ENCODE measurements at regions of chr17 and their contacts with region 1.

Region 1: DNA sequence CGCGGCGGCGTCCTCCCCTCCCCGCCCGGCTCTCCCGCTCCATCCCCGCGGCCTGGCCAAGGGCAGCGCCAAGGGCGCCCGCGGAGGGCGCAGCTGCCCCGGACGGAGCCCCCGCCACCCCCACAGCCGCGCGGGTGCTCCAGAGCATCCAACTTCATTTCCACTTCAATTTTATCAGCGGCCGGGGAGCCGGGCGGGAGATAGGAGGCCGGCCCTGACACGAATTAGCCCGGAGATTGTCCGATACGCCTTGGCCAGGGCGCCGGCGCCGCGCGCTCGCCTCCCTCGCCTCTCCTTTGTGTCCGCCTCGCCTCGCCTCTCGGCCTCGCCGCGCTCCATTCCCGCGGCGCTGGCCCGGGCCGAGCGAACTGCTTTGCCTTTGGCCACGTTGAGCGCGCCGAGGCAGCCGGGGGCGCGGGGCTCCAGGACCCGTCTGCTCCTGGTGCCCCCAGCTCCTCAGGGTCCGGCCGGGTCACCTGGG is 129.1 kb upstream of the LHX1 start:
- DNase-seq: no peak
- ATAC-seq: no peak
- H3K4me3 ChIP-seq: no peak overlapping the region
- H3K27ac ChIP-seq: no peak overlapping the region
- H3K4me1 ChIP-seq: no peaks in the 10 kb centered on the region
- H3K27me3 ChIP-seq: peaks cover 48 to 62% (median 60%) of the 10 kb centered on the region in 3 donors
- CTCF ChIP-seq: no peak
- POLR2A ChIP-seq: no peak

Region 2: DNA sequence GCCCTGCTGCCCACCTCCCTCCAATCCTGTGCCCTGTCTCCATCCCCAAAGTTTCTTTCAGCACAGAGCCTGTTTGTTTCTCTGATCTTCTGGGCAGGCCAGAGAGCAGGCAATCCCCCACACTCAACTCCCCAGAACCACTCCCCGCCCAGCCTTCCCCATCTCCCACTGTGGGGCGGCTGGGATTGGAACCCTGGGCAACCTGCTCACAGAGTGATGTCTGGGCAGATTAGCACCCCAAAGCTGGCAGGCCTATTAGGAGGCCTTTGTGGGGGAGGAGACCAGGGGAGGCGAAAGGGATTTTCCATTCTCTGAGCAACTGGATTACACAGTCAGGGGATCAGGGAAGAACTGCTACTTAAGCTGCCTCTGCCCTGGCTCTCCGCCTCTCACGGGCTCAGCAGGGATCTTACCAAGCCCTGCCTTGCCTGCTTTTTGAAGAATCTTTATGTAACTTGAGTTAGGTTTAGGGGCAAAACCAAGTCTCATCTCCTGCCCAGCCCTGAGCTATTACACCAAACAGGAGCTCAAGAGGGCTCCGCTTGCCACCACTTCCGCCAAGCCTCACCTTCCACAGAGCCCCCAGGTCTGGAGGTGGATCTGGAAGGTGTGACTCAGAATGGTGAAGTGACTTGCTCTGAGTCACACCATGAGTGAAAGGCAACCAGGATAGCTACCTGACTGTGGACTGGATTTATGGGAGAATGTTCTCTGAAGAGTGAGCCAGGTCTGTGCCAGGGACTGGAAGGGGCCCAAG is 113.1 kb after region 1 on chr17:
- in situ Hi-C with region 1: loop called in 1 of 4 experiments (anchors 25 kb)
- intact Hi-C with region 1: no loop called
- DNase-seq: no peak
- ATAC-seq: no peak
- H3K4me3 ChIP-seq: no peak overlapping the region
- H3K27ac ChIP-seq: no peak overlapping the region
- H3K4me1 ChIP-seq: no peaks in the 10 kb centered on the region
- H3K27me3 ChIP-seq: peaks cover 18 to 23% (median 21%) of the 10 kb centered on the region in 3 donors
- CTCF ChIP-seq: no peak
- POLR2A ChIP-seq: no peak

Region 3: GRCh38 chr17:37019117-37019740 is 211.0 kb after region 1 on chr17:
- in situ Hi-C with region 1: no loop called
- intact Hi-C with region 1: no loop called
- DNase-seq: no peak
- ATAC-seq: no peak
- H3K4me3 ChIP-seq: no peak overlapping the region
- H3K27ac ChIP-seq: no peak overlapping the region
- H3K4me1 ChIP-seq: peaks cover 0 to 10% of the 10 kb centered on the region in 2 donors
- H3K27me3 ChIP-seq: no peaks in the 10 kb centered on the region
- CTCF ChIP-seq: no peak
- POLR2A ChIP-seq: no peak

Measured in gastrocnemius medialis (tissue), 4 donors.